Activated T-helper 1 cell treated with anti-CD3 and anti-CD28 coated beads, Interleukin-12 subunit alpha, Interleukin-12 subunit beta, Interleukin-2, Interleukin-4 antibody, amounts not matched to agents 30 ng/mL and 10 ng/mL and 1 ng/mL, durations not matched to agents 14 hours and 24 hours and 36 hours (primary cell): ENCODE measurements at regions of chr2 and their contacts with region 1.

Region 1: GRCh38 chr2:84881581-84882414 is 914 bp upstream of the TRABD2A start:
- DNase-seq: peak; percentile 81
- H3K4me3 Mint-ChIP-seq: peak overlapping the region; percentile 97
- H3K27ac Mint-ChIP-seq: peak overlapping the region; percentile 99
- H3K4me1 Mint-ChIP-seq: peaks cover 71% of the 10 kb centered on the region
- H3K27me3 Mint-ChIP-seq: no peaks in the 10 kb centered on the region

Region 2: GRCh38 chr2:84495539-84496146 is 386.2 kb before region 1 on chr2:
- intact Hi-C with region 1: loop called (anchors 1 kb)
- DNase-seq: peak; percentile 16
- H3K4me3 Mint-ChIP-seq: no peak overlapping the region
- H3K27ac Mint-ChIP-seq: no peak overlapping the region
- H3K4me1 Mint-ChIP-seq: peaks cover 7% of the 10 kb centered on the region
- H3K27me3 Mint-ChIP-seq: no peaks in the 10 kb centered on the region

Region 3: DNA sequence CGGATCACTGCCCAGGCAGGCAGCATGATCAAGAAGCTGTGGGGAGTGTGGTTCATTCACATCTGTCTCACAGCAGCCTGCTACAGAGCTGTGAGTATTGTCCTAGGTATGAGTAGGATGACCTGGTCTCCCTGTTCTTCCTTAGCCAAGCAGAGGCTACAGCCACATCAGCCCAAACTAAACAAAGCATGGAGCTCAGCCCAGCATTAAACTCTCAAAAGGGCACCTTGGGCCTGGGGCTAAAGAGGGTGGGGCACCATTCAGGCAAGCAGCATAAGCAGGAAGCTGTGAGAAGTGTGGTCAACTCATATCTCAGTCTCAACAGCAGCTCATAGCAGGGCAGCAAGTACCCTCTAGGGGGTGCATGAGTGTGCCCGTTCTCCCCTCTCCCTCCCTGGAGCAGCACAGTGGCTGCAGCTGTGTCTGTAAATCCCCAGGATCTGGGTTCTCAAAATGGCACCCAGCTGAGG is 140.5 kb before region 1 on chr2:
- intact Hi-C with region 1: loop called (anchors 2 kb)
- DNase-seq: peak; percentile 21
- H3K4me3 Mint-ChIP-seq: no peak overlapping the region
- H3K27ac Mint-ChIP-seq: no peak overlapping the region
- H3K4me1 Mint-ChIP-seq: peaks cover 11% of the 10 kb centered on the region
- H3K27me3 Mint-ChIP-seq: peaks cover 1% of the 10 kb centered on the region

Region 4: GRCh38 chr2:84830095-84830494 is 51.7 kb before region 1 on chr2:
- intact Hi-C with region 1: no loop called
- DNase-seq: no peak
- H3K4me3 Mint-ChIP-seq: no peak overlapping the region
- H3K27ac Mint-ChIP-seq: no peak overlapping the region
- H3K4me1 Mint-ChIP-seq: peaks cover 24% of the 10 kb centered on the region
- H3K27me3 Mint-ChIP-seq: no peaks in the 10 kb centered on the region

Region 5: GRCh38 chr2:84846041-84846663 is 35.6 kb before region 1 on chr2:
- intact Hi-C with region 1: loop called (anchors 2 kb)
- DNase-seq: peak; percentile 36
- H3K4me3 Mint-ChIP-seq: peak overlapping the region; percentile 64
- H3K27ac Mint-ChIP-seq: peak overlapping the region; percentile 96
- H3K4me1 Mint-ChIP-seq: peaks cover 89% of the 10 kb centered on the region
- H3K27me3 Mint-ChIP-seq: no peaks in the 10 kb centered on the region

Region 6: GRCh38 chr2:84905181-84906107 is 23.6 kb after region 1 on chr2 and contains the start of gene TMSB10:
- intact Hi-C with region 1: loop called (anchors 1 kb)
- DNase-seq: peak; percentile 88
- H3K4me3 Mint-ChIP-seq: peak within 1 kb of the TSS; percentile 97
- H3K27ac Mint-ChIP-seq: peak within 1 kb of the TSS; percentile 95
- H3K4me1 Mint-ChIP-seq: peaks cover 78% of the 10 kb centered on the region
- H3K27me3 Mint-ChIP-seq: no peaks in the 10 kb centered on the region
- total RNA-seq, gene TMSB10: 2,415 and 2,510 TPM in 2 replicates